Vagina (tissue), 2 donors: ENCODE measurements at regions of chr9 and their contacts with region 1.

Region 1: DNA sequence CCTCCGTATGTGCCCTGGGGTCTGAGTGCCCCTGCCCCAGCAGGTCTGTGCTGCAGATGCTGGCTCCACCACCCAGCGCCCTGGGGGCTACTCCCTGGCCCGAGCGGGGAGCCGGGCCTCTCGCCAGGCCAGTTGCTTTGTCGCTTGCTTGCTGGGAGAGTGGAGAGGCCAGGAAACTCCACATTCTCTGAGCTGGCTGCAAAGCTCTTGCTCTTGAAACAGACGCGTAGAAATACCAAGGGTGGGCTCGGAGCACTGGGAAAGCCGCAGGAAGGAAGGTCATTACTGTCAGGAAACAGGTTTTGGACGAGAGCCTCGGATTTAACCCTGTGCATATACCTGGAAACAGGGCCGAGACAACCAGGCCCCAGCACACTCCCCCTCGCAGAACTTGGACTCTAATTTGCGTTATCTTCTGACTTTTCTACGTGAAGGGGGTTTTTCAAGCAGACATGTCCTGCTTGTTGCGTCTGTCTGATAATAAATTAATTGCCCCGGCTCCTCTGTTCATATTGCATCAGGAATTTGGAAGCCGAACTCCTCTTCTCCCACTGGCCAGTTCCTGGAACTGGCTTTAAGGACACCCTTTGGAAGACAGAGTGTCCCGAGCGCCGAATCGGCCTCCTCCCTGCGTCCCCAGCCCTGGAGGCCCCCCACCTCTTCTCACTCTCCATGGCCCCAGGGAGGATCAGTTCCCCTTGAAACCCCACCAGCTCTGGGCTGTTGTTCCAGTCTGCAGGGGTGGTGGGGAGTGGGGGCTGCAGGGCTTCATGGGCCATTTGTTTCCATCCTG is 11.2 kb downstream of the ADAMTSL2 start:
- DNase-seq: no peak
- H3K4me3 ChIP-seq: no peak overlapping the region
- H3K27ac ChIP-seq: no peak overlapping the region
- H3K4me1 ChIP-seq: no peaks in the 10 kb centered on the region
- H3K27me3 ChIP-seq: no peaks in the 10 kb centered on the region
- CTCF ChIP-seq: no peak
- POLR2A ChIP-seq: no peak

Region 2: GRCh38 chr9:133569891-133570690 is 24.4 kb after region 1 on chr9:
- intact Hi-C with region 1: loop called (anchors 2 kb)
- DNase-seq: no peak
- H3K4me3 ChIP-seq: no peak overlapping the region
- H3K27ac ChIP-seq: no peak overlapping the region
- H3K4me1 ChIP-seq: peaks cover 9% of the 10 kb centered on the region
- H3K27me3 ChIP-seq: no peaks in the 10 kb centered on the region
- CTCF ChIP-seq: no peak
- POLR2A ChIP-seq: no peak